ENCODE measurements at regions of chrX and their contacts with region 1.

Region 1: GRCh38 chrX:99719140-99719539 is 690.9 kb downstream of the PCDH19 start:
- DNase-seq: no peak
- H3K4me3 ChIP-seq: no peak overlapping the region
- H3K27ac ChIP-seq: no peak overlapping the region
- H3K4me1 ChIP-seq: no peaks in the 10 kb centered on the region
- H3K27me3 ChIP-seq: no peaks in the 10 kb centered on the region
- CTCF ChIP-seq: no peak

Region 2: DNA sequence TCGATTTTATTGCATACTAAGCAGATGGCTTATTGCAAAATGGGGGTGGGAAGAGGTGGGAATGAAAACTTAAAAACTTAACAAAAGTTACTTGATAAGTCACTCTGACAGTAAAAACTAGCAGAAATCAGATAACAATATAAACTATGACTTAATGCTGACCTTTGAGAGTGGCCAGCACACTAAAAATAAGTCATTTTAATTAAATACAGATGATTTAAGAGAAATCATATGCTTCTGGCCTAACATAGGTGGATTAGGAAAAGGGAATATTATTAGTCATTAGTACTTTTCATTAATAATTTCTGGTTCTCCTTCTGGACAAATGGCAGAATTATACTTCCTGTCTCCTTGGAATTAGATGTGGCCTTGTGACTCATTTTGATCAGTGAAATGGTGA is 65.8 kb before region 1 on chrX:
- intact Hi-C with region 1: loop called (anchors 10 kb)
- DNase-seq: no peak
- H3K4me3 ChIP-seq: no peak overlapping the region
- H3K27ac ChIP-seq: no peak overlapping the region
- H3K4me1 ChIP-seq: no peaks in the 10 kb centered on the region
- H3K27me3 ChIP-seq: no peaks in the 10 kb centered on the region
- CTCF ChIP-seq: no peak

Measured in tibial artery (tissue), 4 donors.